Activated naive CD4-positive, alpha-beta T cell treated with anti-CD3 and anti-CD28 coated beads, Interleukin-2, amount 10 ng/mL, durations not matched to agents 7 days and 5 days (primary cell): ENCODE measurements at regions of chr11 and their contacts with region 1.

Region 1: DNA sequence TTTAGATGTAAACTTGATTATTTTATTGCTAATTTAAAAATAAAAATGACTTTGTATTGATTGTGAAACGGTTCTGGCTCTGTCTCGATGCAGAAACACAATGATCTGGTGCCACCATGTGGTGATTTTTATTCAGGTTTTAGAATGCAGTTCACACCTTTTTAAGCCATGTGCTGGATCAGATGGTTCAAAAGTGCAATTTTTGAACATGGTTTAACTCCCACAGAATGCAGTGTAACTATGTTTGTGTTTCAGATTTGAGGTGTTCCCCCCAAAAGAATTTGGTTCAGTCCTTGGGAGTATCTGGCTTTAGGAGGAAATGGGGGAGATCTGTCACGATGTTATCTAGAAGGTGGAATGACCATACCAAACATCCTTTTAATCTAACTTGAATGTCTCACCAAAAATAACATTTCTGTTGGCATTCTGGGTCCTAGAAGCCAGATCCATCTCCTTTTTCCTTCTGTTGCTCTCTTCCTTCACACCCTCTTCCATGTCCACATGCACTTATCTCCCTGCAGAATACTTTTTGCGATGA is 7.9 kb downstream of the MRPL16 start:
- DNase-seq: peak; percentile 60
- H3K4me3 Mint-ChIP-seq: no peak overlapping the region
- H3K27ac Mint-ChIP-seq: no peak overlapping the region
- H3K4me1 Mint-ChIP-seq: peaks cover 22% of the 10 kb centered on the region
- H3K27me3 Mint-ChIP-seq: no peaks in the 10 kb centered on the region

Region 2: GRCh38 chr11:59767225-59767611 is 35.5 kb before region 1 on chr11:
- CTCF ChIA-PET with region 1: interaction called, 16 read pairs
- DNase-seq: peak; percentile 65
- H3K4me3 Mint-ChIP-seq: no peak overlapping the region
- H3K27ac Mint-ChIP-seq: no peak overlapping the region
- H3K4me1 Mint-ChIP-seq: peaks cover 24% of the 10 kb centered on the region
- H3K27me3 Mint-ChIP-seq: peaks cover 4% of the 10 kb centered on the region

Region 3: GRCh38 chr11:59787816-59788215 is 14.9 kb before region 1 on chr11:
- CTCF ChIA-PET with region 1: interaction called, 10 read pairs
- DNase-seq: no peak
- H3K4me3 Mint-ChIP-seq: no peak overlapping the region
- H3K27ac Mint-ChIP-seq: no peak overlapping the region
- H3K4me1 Mint-ChIP-seq: peaks cover 45% of the 10 kb centered on the region
- H3K27me3 Mint-ChIP-seq: no peaks in the 10 kb centered on the region

Region 4: DNA sequence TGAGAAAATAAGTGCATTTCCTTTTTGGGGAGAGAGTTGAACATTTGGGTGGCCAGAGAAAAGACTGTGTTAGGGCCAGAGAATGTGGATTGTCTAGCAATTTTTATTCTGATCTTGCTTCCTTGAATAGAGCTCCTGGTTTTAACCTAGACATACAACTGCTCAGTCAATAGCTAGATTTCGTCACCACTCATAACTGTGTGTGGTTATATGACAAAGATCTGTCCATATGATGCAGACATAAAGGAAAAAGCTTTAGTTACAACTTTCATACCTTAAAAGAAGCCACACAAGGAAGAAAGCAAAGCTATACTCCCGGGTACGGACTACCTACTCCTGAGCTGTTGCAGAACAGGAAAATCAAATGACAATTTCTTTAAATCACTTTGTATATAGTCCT is 343.0 kb after region 1 on chr11:
- CTCF ChIA-PET with region 1: no interaction called
- DNase-seq: no peak
- H3K4me3 Mint-ChIP-seq: no peak overlapping the region
- H3K27ac Mint-ChIP-seq: no peak overlapping the region
- H3K4me1 Mint-ChIP-seq: no peaks in the 10 kb centered on the region
- H3K27me3 Mint-ChIP-seq: no peaks in the 10 kb centered on the region

Region 5: DNA sequence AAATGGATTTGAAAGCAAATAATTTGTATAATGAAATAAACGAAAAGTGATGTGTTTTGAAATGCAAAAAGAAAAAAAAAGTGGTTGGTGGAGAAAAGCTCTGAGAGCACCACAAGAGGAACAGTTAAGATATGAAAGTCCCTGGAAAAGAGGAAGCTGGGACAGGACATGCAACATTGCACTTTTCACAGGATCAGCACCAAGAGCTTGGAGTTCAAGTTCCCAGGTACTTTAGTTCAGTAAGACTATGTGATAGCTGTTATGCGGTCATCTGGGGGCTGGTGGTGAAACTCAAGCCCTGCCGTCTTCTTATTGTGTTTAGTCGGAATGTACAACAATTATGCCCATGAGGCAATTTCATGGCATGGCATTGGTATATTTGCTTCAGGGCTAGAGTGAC is 460.7 kb after region 1 on chr11:
- CTCF ChIA-PET with region 1: no interaction called
- DNase-seq: no peak
- H3K4me3 Mint-ChIP-seq: no peak overlapping the region
- H3K27ac Mint-ChIP-seq: no peak overlapping the region
- H3K4me1 Mint-ChIP-seq: no peaks in the 10 kb centered on the region
- H3K27me3 Mint-ChIP-seq: no peaks in the 10 kb centered on the region